ENCODE measurements at regions of chr4 and their contacts with region 1.

Region 1: DNA sequence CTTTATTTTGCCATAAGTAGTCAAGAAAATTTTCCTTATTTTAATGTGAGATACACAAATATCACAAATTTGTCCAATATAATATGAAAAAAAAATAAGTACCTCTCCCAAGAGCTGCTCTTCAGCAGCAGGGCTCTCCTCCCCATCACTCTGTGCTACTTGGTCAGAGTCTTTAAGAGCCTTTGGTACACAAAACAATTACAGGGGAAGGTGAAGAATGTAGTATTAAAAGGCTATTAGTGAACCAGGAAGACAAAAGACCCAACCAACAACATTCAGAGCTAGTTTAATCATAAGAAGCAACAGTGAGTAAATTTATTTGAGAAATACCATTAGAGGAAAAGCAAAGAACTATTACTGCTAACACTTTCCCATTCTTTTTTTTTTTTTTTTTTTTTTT is 29.4 kb downstream of the SEC31A start:
- DNase-seq: no peak
- H3K4me3 ChIP-seq: no peak overlapping the region
- H3K27ac ChIP-seq: no peak overlapping the region
- H3K27me3 ChIP-seq: no peaks in the 10 kb centered on the region
- CTCF ChIP-seq: no peak

Region 2: DNA sequence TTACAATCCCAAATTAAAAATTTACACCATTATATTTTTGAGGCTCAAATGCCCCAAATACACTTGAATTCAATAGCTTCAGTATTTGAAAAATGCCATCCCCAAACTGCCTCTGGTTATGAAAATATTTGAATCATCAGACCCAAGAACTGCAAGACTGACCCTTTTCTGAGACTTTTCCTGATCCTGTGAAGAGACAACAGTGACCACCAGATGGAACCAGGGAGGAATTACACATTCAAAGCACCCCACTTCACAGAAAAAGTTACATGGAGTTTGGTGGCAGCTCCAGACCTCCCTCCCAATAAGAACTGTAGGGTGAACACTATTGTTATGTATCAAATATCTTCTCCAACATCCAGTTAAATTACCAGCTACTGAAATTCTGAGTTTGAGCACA is 18.9 kb before region 1 on chr4:
- CTCF ChIA-PET with region 1: interaction called, 3 read pairs
- POLR2A ChIA-PET with region 1: interaction called, 12 read pairs
- DNase-seq: no peak
- H3K4me3 ChIP-seq: no peak overlapping the region
- H3K27ac ChIP-seq: no peak overlapping the region
- H3K27me3 ChIP-seq: no peaks in the 10 kb centered on the region
- CTCF ChIP-seq: peak; percentile 50